ENCODE measurements at regions of chr6 and their contacts with region 1.

Region 1: GRCh38 chr6:148578245-148578732 is 168.5 kb upstream of the UST start:
- DNase-seq: peak; percentile 56
- ATAC-seq: peak; percentile 100
- H3K4me3 Mint-ChIP-seq: no peak overlapping the region
- H3K27ac Mint-ChIP-seq: peak overlapping the region; percentile 55
- H3K4me1 Mint-ChIP-seq: peaks cover 14% of the 10 kb centered on the region
- H3K27me3 Mint-ChIP-seq: peaks cover 7% of the 10 kb centered on the region
- CTCF ChIP-seq: no peak

Region 2: GRCh38 chr6:147724454-147724853 is 853.8 kb before region 1 on chr6:
- CTCF ChIA-PET with region 1: no interaction called
- POLR2A ChIA-PET with region 1: no interaction called
- intact Hi-C with region 1: no loop called
- DNase-seq: no peak
- ATAC-seq: no peak
- H3K4me3 Mint-ChIP-seq: no peak overlapping the region
- H3K27ac Mint-ChIP-seq: no peak overlapping the region
- H3K4me1 Mint-ChIP-seq: no peaks in the 10 kb centered on the region
- H3K27me3 Mint-ChIP-seq: no peaks in the 10 kb centered on the region
- CTCF ChIP-seq: no peak

Region 3: DNA sequence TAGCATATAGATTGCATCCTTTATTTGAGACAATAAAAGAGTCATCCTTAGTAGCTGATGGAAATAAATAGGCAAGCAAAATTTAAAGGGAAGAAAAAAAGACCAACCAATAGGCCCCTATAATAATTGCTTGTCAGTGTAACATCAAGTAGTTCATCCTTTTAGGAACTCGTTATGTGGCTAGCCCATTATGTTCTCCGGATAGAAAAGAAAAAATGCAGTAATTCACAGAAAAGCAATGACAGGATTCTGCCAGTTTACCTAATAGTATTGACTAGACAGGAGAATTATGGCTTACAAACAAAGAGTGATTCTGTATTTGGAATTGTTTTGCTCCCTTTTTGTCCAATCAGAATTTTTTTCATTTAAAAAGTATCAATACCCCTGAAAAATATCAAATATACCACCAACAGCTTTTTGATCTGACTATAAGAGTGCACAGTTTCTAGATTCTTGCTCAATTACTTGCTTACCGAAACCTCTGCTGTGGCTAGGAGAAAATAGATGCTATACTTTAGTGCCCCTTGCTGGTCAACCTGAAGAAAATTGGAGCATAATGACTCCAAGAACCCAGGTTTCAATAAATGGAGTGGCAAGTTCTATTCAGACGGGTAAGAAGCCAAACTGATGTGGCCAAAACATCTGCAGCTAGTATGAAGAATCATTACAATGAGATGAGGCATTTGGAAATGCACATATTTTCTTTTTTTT is 327.2 kb before region 1 on chr6:
- CTCF ChIA-PET with region 1: no interaction called
- POLR2A ChIA-PET with region 1: no interaction called
- intact Hi-C with region 1: no loop called
- DNase-seq: no peak
- ATAC-seq: no peak
- H3K4me3 Mint-ChIP-seq: no peak overlapping the region
- H3K27ac Mint-ChIP-seq: no peak overlapping the region
- H3K4me1 Mint-ChIP-seq: no peaks in the 10 kb centered on the region
- H3K27me3 Mint-ChIP-seq: peaks cover 2% of the 10 kb centered on the region
- CTCF ChIP-seq: no peak

Region 4: GRCh38 chr6:148395583-148396101 is 182.6 kb before region 1 on chr6:
- CTCF ChIA-PET with region 1: no interaction called
- POLR2A ChIA-PET with region 1: no interaction called
- intact Hi-C with region 1: no loop called
- DNase-seq: no peak
- ATAC-seq: no peak
- H3K4me3 Mint-ChIP-seq: no peak overlapping the region
- H3K27ac Mint-ChIP-seq: no peak overlapping the region
- H3K4me1 Mint-ChIP-seq: no peaks in the 10 kb centered on the region
- H3K27me3 Mint-ChIP-seq: peaks cover 3% of the 10 kb centered on the region
- CTCF ChIP-seq: no peak

Region 5: GRCh38 chr6:148657048-148657447 is 78.8 kb after region 1 on chr6:
- CTCF ChIA-PET with region 1: interaction called, 3 read pairs
- POLR2A ChIA-PET with region 1: no interaction called
- intact Hi-C with region 1: loop called (anchors 5 kb)
- DNase-seq: no peak
- ATAC-seq: peak; percentile 93
- H3K4me3 Mint-ChIP-seq: peak overlapping the region; percentile 47
- H3K27ac Mint-ChIP-seq: peak overlapping the region; percentile 86
- H3K4me1 Mint-ChIP-seq: peaks cover 19% of the 10 kb centered on the region
- H3K27me3 Mint-ChIP-seq: no peaks in the 10 kb centered on the region
- CTCF ChIP-seq: no peak

Region 6: DNA sequence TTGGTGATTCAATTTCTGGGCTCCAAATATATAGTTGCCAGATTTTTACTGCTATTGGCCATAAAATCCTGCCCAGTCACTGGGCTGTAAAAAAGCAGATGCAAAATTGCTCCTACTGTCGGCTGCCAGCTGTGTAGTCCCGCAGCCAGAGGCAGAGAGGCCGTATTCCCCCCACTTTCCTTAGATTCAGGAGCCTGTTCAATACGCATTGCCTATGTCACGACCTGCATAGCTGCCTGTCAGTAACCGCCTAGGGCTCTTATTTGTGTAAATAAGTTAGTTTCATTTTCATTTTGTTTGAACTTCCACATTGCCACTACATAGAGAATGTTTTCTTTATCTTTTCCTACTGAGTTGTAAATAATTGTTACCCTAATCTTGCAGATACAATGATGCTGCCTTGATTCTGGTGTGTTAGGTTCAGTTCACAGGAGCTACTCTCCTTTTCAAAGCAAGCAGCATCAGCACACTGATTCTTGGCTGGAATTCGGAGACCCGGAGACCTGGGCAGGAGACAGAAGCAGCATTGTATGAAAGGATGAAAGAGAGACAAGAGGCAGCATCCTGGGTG is 122.5 kb after region 1 on chr6:
- CTCF ChIA-PET with region 1: interaction called, 35 read pairs
- POLR2A ChIA-PET with region 1: interaction called, 9 read pairs
- intact Hi-C with region 1: loop called (anchors 1 kb)
- DNase-seq: no peak
- ATAC-seq: peak; percentile 58
- H3K4me3 Mint-ChIP-seq: peak overlapping the region; percentile 74
- H3K27ac Mint-ChIP-seq: peak overlapping the region; percentile 26
- H3K4me1 Mint-ChIP-seq: peaks cover 16% of the 10 kb centered on the region
- H3K27me3 Mint-ChIP-seq: no peaks in the 10 kb centered on the region
- CTCF ChIP-seq: no peak

Region 7: DNA sequence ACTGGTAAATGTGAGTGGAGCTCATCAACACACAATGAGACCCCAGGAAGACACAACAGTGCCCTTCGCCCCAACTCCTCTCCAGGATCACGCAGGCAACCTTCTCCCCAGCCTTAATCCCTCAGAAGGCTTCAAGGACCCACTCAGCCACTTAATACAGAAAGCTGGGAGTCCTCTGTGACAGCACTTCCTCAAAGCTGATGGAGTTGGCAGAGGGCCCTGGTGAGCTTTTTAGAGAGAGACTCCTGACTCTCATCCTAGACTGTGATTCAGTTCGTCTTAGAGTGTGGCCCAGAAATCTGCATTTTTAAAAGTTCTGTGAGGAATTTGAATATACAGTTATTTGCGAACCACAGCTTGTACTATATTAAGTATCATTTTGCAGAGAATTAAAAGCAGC is 356.2 kb after region 1 on chr6:
- CTCF ChIA-PET with region 1: interaction called, 12 read pairs
- POLR2A ChIA-PET with region 1: no interaction called
- intact Hi-C with region 1: no loop called
- DNase-seq: no peak
- ATAC-seq: peak; percentile 21
- H3K4me3 Mint-ChIP-seq: no peak overlapping the region
- H3K27ac Mint-ChIP-seq: no peak overlapping the region
- H3K4me1 Mint-ChIP-seq: peaks cover 26% of the 10 kb centered on the region
- H3K27me3 Mint-ChIP-seq: no peaks in the 10 kb centered on the region
- CTCF ChIP-seq: no peak

Region 8: DNA sequence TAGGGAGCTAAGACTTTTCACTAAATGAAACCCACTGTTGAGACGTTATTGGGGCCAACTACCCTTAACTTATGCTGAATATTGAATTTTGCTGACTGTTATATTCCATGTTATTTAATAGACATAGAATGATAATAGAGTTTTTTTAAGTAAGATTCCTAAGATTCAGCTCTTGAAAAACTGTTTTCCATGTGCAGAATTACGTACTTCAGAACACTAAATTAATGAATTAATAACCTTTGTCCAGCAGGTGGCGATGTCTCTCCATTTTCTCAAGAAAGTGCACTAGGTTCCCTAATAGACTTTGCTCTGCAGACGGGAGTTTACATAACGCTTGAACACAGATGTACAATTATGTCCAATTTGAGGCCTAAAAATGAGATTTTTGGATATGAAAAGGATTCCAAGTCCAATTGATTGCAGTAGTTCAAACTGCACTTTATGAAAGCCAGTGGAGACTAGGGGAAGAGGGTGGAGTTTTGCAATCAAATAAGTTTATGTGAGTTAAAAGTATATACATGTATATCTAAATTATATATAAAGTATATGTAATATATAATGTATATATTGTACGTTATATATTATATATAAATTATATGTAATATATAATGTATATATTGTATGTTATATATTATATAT is 450.6 kb after region 1 on chr6:
- CTCF ChIA-PET with region 1: interaction called, 12 read pairs
- POLR2A ChIA-PET with region 1: no interaction called
- intact Hi-C with region 1: loop called (anchors 1 kb)
- DNase-seq: no peak
- ATAC-seq: peak; percentile 33
- H3K4me3 Mint-ChIP-seq: no peak overlapping the region
- H3K27ac Mint-ChIP-seq: peak overlapping the region; percentile 75
- H3K4me1 Mint-ChIP-seq: peaks cover 43% of the 10 kb centered on the region
- H3K27me3 Mint-ChIP-seq: no peaks in the 10 kb centered on the region
- CTCF ChIP-seq: peak; percentile 65